ENCODE measurements at regions of chr4 and their contacts with region 1.

Region 1: DNA sequence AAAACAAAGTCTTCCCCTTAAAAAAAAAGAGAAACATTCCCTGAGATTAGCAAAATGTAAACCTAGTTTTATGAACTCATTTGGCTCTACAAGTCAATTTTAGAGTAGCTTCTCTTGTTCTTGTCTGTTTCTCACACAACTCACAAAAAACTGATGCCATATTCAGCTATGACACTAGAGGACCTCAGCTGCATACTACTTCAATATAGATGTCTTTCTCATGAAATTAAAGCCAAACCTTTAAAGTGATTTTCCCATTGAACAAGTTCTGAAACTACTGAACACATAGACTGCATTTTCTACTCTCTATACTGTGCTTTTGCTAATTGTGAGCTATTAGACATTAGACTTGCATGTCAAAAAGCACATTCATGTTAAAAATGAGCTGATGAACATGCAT is 49.8 kb downstream of the TBCK start:
- DNase-seq: peak; percentile 73
- ATAC-seq: peak; percentile 73; the same call in 2 of the 3 replicates
- H3K4me3 ChIP-seq: no peak overlapping the region
- H3K27ac ChIP-seq: peak overlapping the region; percentile 94
- H3K4me1 ChIP-seq: peaks cover 94% of the 10 kb centered on the region
- H3K27me3 ChIP-seq: no peaks in the 10 kb centered on the region
- CTCF ChIP-seq: peak; percentile 81
- EP300 ChIP-seq: no peak
- POLR2A ChIP-seq: no peak
- RAD21 ChIP-seq: peak; percentile 63; the same call in 1 of the 2 replicates

Region 2: DNA sequence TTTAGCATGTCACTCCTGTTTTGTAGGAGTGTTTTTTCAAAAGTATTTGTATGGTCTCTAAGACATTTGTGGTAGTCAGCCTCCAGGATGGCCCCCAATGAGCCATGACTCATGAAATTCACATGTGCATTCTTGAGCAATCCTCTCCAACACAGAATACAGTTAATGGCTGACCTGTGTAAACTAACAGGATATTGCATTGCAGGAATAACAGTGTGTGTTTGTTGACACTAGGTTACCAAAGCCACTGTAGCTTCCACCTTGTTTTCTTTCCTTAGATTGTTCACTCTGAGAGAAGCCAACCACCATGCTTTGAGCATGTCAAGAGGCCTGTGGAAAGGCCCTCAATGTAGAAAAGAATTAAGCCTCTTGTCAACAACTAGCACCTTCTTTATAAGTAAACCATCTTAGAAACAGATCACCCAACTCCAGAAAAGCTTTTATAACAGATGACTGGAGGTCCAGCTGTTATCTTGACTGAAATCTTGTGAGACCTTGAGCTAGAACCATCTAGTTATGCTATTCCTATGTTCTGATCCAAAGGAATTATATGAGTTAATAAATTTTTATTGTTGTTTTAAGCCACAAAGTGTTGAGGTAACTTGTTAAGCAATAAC is 21.3 kb after region 1 on chr4:
- CTCF ChIA-PET with region 1: no interaction called
- POLR2A ChIA-PET with region 1: interaction called, 21 read pairs
- in situ Hi-C with region 1: no loop called
- intact Hi-C with region 1: no loop called
- DNase-seq: peak; percentile 97
- ATAC-seq: peak; percentile 100
- H3K4me3 ChIP-seq: no peak overlapping the region
- H3K27ac ChIP-seq: peak overlapping the region; percentile 98
- H3K4me1 ChIP-seq: peaks cover 37% of the 10 kb centered on the region
- H3K27me3 ChIP-seq: no peaks in the 10 kb centered on the region
- CTCF ChIP-seq: no peak
- EP300 ChIP-seq: peak; percentile 88 to 98
- POLR2A ChIP-seq: no peak
- RAD21 ChIP-seq: no peak

Region 3: DNA sequence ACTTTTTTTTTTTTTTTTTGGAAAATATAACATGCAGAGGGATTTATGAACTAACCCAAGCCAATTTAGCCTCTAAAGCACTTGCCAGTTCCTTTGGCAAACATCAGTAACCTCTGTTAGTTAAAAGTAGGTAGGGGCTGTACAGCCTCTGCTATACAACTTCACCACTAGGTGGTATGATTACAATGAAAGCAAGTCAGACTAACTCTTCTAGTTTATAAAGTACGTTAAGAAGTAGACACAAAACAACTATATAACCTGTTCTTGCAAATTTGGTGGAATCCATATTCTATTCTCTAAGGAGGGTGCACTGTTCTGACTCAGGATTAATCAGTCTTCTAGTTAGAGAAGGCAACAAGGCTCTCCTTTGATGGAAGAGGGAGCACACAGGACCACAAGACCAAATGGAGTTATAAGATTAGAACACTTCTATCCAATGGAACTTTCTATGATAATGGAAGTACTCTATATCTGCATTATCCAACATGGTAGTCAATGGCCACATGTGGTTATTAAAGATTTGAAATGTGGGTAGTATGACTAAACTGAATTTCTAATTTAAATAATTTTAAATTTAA is 62.9 kb after region 1 on chr4:
- CTCF ChIA-PET with region 1: interaction called, 5 read pairs
- POLR2A ChIA-PET with region 1: interaction called, 4 read pairs
- in situ Hi-C with region 1: no loop called
- intact Hi-C with region 1: loop called (anchors 2 kb)
- DNase-seq: peak; percentile 57
- ATAC-seq: peak; percentile 97
- H3K4me3 ChIP-seq: no peak overlapping the region
- H3K27ac ChIP-seq: peak overlapping the region; percentile 26
- H3K4me1 ChIP-seq: peaks cover 23% of the 10 kb centered on the region
- H3K27me3 ChIP-seq: no peaks in the 10 kb centered on the region
- CTCF ChIP-seq: peak; percentile 69
- EP300 ChIP-seq: no peak
- POLR2A ChIP-seq: no peak
- RAD21 ChIP-seq: no peak

Region 4: GRCh38 chr4:106502106-106502699 is 236.0 kb after region 1 on chr4:
- CTCF ChIA-PET with region 1: interaction called, 16 read pairs
- POLR2A ChIA-PET with region 1: interaction called, 4 read pairs
- in situ Hi-C with region 1: loop called (anchors 5 kb)
- intact Hi-C with region 1: loop called (anchors 1 kb)
- DNase-seq: peak; percentile 58
- ATAC-seq: peak; percentile 98
- H3K4me3 ChIP-seq: no peak overlapping the region; a peak in 1 of 6 replicates
- H3K27ac ChIP-seq: no peak overlapping the region
- H3K4me1 ChIP-seq: peaks cover 10% of the 10 kb centered on the region; the same call in 1 of the 2 replicates
- H3K27me3 ChIP-seq: 0 out of 5 replicates have a peak, but pooled peaks cover 0 to 5% of the 10 kb centered on the region in 2 experiments
- CTCF ChIP-seq: peak; percentile 84
- EP300 ChIP-seq: no peak
- POLR2A ChIP-seq: no peak
- RAD21 ChIP-seq: peak; percentile 71

Region 5: DNA sequence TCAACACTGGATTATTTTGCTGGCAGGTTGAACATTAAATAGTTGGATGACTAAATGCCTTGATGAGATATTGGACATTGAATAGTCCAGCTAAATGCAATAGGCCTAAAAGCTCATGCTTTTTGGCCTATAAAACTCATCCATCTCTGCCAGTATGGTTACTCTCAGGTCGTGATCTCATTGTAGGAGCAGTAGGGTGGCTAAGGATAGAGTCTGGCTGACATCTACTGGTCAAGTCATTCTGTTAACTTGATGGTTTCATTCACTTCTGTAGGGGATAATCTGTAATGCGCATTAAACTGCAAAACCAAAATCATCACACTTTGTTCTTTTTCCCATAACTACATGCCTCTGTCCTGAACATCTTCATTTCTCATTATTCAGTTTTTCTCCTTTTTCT is 542.9 kb after region 1 on chr4:
- CTCF ChIA-PET with region 1: no interaction called
- POLR2A ChIA-PET with region 1: no interaction called
- in situ Hi-C with region 1: no loop called
- intact Hi-C with region 1: loop called (anchors 10 kb)
- DNase-seq: peak; percentile 19
- ATAC-seq: peak; percentile 89
- H3K4me3 ChIP-seq: no peak overlapping the region
- H3K27ac ChIP-seq: no peak overlapping the region
- H3K4me1 ChIP-seq: no peaks in the 10 kb centered on the region
- H3K27me3 ChIP-seq: no peaks in the 10 kb centered on the region
- CTCF ChIP-seq: peak; percentile 69
- EP300 ChIP-seq: no peak
- POLR2A ChIP-seq: no peak
- RAD21 ChIP-seq: no peak